ACHN (cell line): ENCODE measurements at regions of chr12 and their contacts with region 1.

Region 1: GRCh38 chr12:55915482-55915859 is 12.2 kb downstream of the PYM1 start:
- DNase-seq: no peak

Region 2: GRCh38 chr12:55132816-55133215 is 782.7 kb before region 1 on chr12:
- in situ Hi-C with region 1: no loop called
- DNase-seq: no peak

Region 3: GRCh38 chr12:55875704-55876467 is 39.6 kb before region 1 on chr12:
- in situ Hi-C with region 1: loop called (anchors 5 kb)
- DNase-seq: no peak

Region 4: GRCh38 chr12:56020423-56021184 is 105.1 kb after region 1 on chr12 and contains the start of gene IKZF4:
- in situ Hi-C with region 1: no loop called
- DNase-seq: no peak

Region 5: GRCh38 chr12:56084958-56085543 is 169.6 kb after region 1 on chr12:
- in situ Hi-C with region 1: no loop called
- DNase-seq: peak; percentile 54